Caki2 (cell line): ENCODE measurements at regions of chr3 and their contacts with region 1.

Region 1: DNA sequence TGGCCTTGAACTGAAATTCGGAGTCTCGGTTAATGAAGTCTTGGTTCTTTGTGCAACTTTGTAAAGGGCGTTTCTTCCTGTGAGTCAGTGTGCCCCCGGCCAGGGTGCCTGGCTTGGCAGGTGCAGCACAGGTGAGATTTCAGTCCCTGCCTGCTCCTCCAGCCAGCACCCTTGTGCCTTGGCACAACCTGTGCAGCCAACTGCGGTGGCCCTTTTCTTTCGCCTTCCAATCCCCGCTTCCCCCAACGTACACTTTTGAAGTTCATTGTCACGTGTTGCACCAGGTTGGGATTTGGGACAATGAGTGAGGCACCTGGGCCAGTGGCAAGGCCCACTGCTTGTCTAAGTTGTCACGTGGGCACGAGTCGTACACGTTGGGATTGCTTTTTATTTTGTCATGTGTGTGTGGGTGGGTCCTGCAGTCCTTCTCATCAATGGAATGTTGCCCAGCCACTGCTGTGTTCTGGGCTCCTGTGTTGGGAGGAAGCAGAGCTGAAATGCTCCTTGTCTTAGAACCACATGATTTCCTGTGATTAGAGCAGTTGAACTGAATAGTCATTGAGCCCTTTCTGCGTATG is 242.9 kb upstream of the BHLHE40 start:
- DNase-seq: no peak

Region 2: GRCh38 chr3:4978204-4978965 is 242.0 kb after region 1 on chr3:
- in situ Hi-C with region 1: loop called (anchors 10 kb)
- DNase-seq: peak; percentile 99